ENCODE measurements at regions of chr13 and their contacts with region 1.

Region 1: GRCh38 chr13:72985610-72986009 is 73.2 kb upstream of the KLF5 start:
- DNase-seq: no peak
- ATAC-seq: no peak
- H3K4me3 ChIP-seq: no peak overlapping the region
- H3K4me3 Mint-ChIP-seq: no peak overlapping the region
- H3K27ac ChIP-seq: no peak overlapping the region
- H3K27ac Mint-ChIP-seq: no peak overlapping the region
- H3K4me1 ChIP-seq: no peaks in the 10 kb centered on the region
- H3K4me1 Mint-ChIP-seq: no peaks in the 10 kb centered on the region
- H3K27me3 ChIP-seq: no peaks in the 10 kb centered on the region
- H3K27me3 Mint-ChIP-seq: no peaks in the 10 kb centered on the region

Region 2: GRCh38 chr13:73593199-73593765 is 607.7 kb after region 1 on chr13:
- CTCF ChIA-PET with region 1: no interaction called
- POLR2A ChIA-PET with region 1: interaction called in 1 of 2 experiments, 10 read pairs
- DNase-seq: no peak
- ATAC-seq: no peak
- H3K4me3 ChIP-seq: no peak overlapping the region
- H3K4me3 Mint-ChIP-seq: no peak overlapping the region
- H3K27ac ChIP-seq: no peak overlapping the region
- H3K27ac Mint-ChIP-seq: no peak overlapping the region
- H3K4me1 ChIP-seq: peaks cover 0 to 2% of the 10 kb centered on the region in 2 experiments
- H3K4me1 Mint-ChIP-seq: peaks cover 10% of the 10 kb centered on the region in 3 donors
- H3K27me3 ChIP-seq: no peaks in the 10 kb centered on the region
- H3K27me3 Mint-ChIP-seq: no peaks in the 10 kb centered on the region

Measured in T-cell (primary cell).